HAP-1 (cell line): ENCODE measurements at regions of chr5 and their contacts with region 1.

Region 1: DNA sequence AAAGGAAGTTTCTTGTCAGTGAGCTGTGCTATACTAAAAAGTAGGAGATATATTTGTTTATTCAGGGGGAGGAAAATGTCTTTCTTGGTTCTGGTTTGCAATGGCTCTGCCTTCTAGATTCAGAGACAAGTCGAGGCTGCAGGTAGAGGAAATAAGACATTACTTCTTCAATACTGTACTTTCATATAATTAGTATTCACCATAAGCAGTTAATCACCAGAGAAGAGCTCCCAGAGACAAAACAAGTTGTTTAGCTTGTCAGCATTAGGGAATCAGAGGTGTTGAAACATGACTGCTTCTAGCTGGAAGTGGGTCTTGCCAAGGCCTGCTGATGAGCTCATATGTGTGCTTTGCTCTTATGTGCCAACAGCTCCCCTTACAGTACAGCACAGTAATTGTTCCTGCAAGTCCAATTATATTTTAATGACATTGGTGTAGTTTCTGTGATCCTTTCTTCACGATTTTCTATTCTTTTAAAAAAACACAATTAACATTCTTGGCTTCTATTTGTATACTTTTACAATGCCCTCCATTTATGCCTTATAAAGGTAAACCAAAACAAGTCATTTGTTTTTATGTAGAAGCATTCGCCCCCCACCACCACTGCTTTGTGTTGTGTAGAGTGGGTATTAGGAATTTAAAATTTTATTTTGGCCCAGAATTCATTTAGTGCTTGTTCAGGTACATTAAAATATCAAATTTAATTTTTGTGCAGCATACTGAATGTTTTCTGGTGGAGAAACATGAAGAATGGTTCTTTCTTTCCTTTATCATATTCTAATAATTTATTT is 112.2 kb downstream of the RPS23 start:
- DNase-seq: peak; percentile 70 to 83
- H3K4me3 ChIP-seq: no peak overlapping the region
- H3K4me1 ChIP-seq: peaks cover 32% of the 10 kb centered on the region
- H3K27me3 ChIP-seq: no peaks in the 10 kb centered on the region

Region 2: DNA sequence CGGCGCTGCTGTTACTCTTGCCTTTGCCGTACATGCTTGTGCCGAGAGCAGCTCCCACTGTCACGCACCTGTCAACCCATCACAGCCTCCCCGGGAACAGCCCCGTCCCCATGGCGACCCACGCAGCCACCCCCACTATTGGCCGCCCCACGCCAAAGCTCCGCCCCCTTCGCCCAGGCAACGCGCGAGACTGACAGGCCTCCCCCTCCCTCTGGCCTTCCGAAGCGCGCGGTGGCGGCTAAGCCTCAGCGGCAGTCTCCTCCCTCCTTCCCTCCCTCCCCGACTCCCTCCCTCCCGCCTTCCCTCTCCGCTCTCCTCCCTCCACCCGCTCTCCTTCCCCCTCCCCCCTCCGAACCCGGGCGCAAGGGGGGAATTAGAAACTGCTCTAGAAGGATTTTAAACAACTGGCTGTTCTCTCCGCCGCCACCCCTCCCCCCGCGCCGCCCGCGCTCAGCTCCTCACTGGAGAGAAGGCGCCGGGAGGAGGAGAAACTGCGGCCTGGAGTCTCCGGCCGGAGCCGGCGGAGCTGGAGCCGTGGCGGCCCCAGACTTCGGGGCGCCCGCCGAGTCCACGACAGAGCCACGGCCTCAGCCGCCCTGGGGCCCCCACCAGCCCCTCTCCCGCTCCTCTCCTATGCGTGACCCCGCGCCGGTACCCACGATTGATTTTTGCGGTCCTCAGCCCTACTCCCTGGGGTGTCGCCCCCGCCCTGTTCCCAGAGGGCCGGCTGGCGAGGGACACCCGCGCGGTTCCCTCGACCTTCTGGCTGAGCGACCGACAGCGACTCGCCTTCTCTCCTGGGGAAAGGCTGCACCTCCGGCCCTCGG is 414.7 kb before region 1 on chr5 and contains the start of gene SSBP2:
- in situ Hi-C with region 1: loop called (anchors 25 kb)
- DNase-seq: peak; percentile 97 to 100
- H3K4me3 ChIP-seq: peak within 1 kb of the TSS; percentile 58
- H3K4me1 ChIP-seq: peaks cover 45% of the 10 kb centered on the region
- H3K27me3 ChIP-seq: no peaks in the 10 kb centered on the region